GM10248 (cell line): ENCODE measurements at regions of chr6 and their contacts with region 1.

Region 1: DNA sequence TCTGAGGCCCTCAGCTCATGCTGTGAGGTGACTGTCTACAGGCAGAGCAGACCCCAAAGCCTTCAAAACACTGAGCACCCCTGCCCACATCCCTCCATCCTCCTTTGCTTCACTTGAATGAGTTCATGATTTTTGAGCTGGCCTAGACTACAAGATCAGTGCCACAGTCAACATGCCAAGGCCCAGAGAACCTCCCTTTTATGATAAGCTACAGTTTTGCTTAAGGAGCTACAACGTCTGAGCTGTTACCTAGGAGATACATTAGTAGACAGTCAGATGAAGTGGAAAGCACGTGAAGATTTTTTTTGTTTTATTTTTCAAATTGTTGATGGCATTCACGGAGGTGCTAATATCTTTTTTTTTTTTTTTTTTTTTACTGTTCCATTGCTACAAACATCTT is 139.0 kb downstream of the SOBP start:
- DNase-seq: no peak
- CTCF ChIP-seq: no peak

Region 2: DNA sequence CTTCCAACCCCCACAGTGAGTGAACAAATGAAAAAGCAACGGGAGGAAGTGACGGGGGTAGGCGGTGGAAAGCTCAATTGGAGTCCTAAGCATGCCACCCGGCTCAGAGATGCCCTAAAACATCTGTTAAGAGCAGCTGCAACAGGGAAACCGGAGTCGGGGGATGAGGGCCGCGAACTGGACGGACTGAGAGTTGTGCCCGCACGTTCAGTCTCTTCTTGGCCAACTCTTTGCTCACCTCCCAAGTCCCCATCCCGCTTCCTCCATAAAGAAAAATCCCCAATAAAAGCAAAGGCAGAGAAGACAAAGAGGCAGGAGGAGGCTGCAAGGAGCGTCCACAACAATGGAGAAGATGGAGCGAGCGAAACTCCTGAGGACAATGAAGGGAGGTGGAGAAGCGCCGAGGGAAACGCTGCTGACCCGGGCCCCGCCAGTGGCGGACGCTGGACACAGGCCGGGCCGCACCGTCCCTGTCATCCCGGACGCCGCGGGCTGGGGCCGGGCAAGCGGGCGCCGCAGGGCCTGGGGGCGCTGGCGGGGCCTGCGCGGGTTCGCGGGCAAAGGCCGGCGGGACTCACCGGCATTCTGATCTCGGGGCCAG is 328.5 kb after region 1 on chr6:
- CTCF ChIA-PET with region 1: no interaction called
- POLR2A ChIA-PET with region 1: interaction called, 16 read pairs
- DNase-seq: peak; percentile 50
- CTCF ChIP-seq: no peak